AG04449 (cell line): ENCODE measurements at regions of chr14 and their contacts with region 1.

Region 1: DNA sequence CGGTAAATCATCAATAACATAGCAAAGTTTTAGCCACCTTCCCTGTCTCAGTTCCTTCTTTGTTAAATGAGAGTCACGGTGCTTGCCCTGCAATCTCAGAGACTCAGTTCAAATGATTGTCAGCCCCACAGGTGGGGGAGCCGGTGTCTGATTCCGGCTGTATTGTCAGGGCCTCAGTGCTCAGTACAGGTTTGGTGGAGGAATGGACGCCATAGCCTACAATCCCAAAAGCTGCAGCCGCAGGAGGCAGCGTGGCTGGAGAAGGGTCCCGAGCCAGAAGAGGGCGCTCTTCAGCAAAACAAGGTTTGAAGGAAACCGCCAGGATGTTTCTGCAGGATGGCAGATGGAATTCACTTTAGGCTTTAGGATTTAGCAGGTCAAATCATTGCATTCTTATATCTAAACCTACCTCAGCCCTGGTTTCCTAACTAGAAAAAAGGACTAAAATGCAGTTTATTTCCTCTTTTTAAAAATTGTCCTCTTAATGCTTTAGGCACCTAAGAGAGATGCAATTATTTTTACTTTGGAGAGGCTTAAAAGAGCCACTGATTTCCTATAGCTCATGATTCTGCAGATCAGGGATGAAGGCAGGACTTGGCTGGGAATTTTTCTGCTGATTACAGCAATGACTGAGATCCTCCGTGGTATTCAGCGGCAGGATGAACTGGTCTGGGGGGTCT is 29.2 kb downstream of the FOS start:
- DNase-seq: no peak
- H3K4me3 ChIP-seq: no peak overlapping the region
- CTCF ChIP-seq: peak; percentile 93

Region 2: DNA sequence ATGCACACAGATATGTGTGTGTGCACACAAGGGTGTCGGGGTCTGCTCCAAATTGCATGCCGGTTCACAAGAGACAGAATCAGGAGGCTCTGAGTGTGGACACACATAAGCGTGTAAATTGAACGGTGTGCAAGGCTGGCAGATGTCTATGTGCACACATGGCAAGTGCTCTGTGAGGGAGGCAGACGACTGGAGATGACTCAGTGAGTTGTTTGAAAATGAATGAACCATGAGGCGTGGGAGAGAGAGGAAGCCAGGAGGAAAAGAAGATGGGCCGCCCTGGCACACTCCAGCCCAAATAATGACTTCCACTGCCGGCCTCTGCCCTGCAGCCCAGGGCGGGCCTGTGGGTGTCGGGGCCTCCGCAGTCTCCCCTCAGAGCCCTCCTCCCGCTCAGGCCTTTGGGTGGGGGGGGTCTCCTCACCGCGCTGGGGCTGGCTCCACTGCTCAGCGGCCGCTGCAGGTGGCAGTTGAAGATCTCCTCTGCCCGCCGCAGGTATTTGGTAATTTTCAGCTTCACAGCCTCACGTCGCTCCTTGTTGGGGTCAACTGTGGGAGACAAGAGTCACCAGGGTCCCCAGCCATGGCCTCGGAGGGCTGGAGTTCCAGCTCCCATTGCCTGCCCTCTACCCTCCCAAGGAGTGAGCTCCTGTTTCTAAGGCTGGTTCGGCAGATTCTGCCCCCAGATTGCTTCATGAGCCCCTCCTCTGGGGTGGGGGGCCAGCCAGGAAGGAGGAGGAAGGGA is 388.2 kb before region 1 on chr14:
- CTCF ChIA-PET with region 1: no interaction called
- POLR2A ChIA-PET with region 1: no interaction called
- DNase-seq: no peak
- H3K4me3 ChIP-seq: no peak overlapping the region
- CTCF ChIP-seq: no peak

Region 3: DNA sequence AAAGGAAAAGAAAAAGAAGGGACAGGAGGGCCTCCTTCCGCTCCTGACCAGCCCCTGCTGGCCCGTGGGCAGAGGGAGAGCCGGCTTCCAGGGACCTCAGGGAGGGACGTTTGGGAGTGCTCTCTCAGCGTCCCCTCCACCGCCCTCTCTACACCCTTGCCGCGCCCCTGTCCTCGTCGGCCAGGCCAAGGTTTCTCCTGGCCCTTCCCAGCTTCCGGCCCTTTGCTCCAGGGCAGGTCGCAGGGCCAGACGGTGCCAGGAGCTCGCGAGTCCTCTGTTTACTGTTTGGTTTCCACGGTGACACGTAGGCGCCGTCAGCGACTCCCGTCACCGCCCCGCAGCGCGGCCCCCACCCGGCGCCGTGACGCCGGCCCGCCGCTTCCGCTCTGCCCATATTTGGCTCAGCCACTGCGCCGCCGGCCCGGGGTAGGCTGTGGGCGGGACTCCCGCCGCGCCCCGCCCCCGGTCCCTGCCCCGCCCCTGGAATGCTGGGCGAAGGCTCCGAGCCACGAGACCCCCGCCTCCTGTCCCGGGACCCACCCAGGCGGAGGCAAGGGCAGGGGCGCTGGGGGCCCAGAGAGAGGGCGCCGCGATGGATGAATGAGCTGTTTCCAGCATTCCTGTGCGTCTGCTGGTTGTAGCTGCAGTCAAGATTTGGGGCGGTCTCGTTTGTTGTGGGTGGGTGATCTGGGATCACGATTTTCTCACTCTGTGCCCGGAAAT is 13.8 kb before region 1 on chr14:
- CTCF ChIA-PET with region 1: interaction called, 32 read pairs
- POLR2A ChIA-PET with region 1: no interaction called
- DNase-seq: no peak
- H3K4me3 ChIP-seq: peak overlapping the region; percentile 79
- CTCF ChIP-seq: no peak

Region 4: DNA sequence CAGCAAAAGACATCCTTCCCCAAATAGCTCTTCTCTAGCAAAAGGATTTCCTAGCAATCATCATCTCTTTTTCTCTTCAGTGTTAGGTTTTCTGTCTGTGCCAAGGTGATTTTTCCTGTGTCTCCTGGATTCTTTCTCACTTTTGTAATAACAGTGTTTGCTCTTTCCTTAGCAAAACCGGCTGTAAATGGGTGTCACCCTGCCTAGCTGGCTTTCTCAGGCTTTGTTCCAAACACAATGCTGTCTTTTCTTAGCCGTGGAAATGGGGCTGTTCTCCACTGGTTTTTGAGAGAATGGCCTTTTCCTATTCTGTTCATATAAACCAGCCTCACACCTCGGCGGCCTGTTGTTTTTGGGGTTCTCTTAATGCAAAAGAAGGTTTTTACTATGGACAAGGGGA is 141.9 kb after region 1 on chr14:
- CTCF ChIA-PET with region 1: interaction called, 10 read pairs
- POLR2A ChIA-PET with region 1: no interaction called
- DNase-seq: no peak
- H3K4me3 ChIP-seq: no peak overlapping the region
- CTCF ChIP-seq: no peak

Region 5: DNA sequence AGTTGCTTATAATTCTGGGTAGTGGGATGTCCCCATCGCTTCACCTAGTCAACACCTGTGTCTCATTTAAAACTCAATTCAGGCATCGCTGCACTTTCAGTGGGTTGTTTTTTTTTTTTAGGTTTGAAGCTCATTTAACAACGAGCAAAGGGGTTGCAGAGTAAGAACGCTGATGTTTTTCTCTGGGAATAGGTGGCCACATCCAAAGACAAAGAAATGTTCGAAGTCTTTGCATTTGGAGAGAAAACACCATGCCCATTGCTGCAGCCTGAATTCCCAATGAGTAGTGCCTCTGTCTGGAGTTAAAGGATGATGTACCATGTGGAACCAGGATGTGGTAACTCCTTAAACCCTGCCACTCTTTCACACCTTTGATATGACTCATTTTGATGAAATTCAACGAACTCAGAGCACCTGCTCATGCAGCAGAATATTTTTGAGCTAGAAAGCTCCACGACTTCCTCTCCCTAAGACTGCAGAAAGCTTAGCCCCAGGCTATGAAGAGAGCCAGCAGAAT is 179.4 kb after region 1 on chr14:
- CTCF ChIA-PET with region 1: interaction called, 412 read pairs
- POLR2A ChIA-PET with region 1: no interaction called
- DNase-seq: no peak
- H3K4me3 ChIP-seq: no peak overlapping the region
- CTCF ChIP-seq: no peak

Region 6: DNA sequence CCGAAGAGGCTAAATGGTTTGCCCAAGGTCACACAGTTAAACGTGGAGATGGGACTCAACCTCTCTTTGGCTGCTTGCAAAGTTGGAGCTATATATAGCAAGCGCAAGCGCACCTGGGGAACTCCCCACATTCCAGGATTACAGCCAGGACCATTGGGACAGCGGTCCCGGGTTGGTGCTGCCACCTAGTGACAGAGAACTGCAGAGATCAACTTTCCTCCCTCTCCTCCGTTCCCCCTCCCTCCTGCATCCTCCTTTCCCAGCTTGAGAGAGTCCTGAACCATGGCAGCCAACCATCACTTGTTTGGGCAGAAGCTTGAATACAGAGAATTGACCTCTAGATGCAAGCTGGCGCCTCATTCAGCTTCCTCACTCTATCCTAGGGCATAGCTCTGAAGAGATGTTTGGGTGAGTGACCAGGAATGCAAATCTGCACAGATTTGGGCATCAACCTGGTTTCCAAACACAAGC is 253.2 kb after region 1 on chr14:
- CTCF ChIA-PET with region 1: interaction called, 36 read pairs
- POLR2A ChIA-PET with region 1: no interaction called
- DNase-seq: no peak
- H3K4me3 ChIP-seq: no peak overlapping the region
- CTCF ChIP-seq: peak; percentile 86